ENCODE measurements at regions of chr11 and their contacts with region 1.

Region 1: GRCh38 chr11:33869481-33870422 is 22.1 kb downstream of the LMO2 start:
- DNase-seq: peak; percentile 39 to 92 (median 64)
- ATAC-seq: peak; percentile 81
- H3K4me3 ChIP-seq: peak overlapping the region; percentile 42 to 64
- H3K27ac ChIP-seq: peak overlapping the region; percentile 74 to 92
- H3K4me1 ChIP-seq: peaks cover 0 to 58% of the 10 kb centered on the region in 2 donors
- H3K27me3 ChIP-seq: peaks cover 5 to 32% of the 10 kb centered on the region in 2 donors
- CTCF ChIP-seq: no peak

Region 2: DNA sequence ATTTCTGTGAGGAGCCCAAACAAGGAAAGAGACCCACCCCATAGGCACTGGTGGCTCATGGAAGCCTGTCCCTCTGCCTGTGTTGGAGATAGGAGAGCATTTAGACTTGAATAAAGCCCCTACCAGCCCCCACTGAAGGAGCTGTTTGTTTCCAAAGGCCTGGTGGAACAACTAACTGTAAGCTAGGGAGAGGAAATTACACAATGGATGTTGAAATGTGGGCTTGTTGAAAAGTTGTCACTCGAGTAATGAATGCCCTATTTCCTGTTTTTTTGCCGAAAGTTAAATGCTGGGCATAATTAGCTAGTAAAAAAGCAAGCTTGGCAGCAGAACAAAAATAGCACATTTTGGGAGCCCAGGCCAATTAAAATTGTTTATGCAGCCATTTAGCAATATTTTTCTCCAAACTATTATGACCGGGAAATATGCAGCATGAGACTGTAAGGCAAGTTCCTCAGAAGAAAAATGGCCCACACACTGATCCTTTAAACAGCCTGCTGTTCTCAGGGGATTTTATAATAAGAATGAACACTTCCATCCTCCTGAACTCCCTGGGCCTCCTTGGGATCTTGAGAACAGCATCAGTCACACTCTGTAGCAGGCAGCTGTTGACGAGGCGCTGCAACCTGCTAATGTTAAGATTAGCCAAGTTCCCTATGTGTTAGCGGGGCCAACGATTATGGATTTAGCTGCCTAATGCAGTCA is 60.7 kb after region 1 on chr11:
- intact Hi-C with region 1: loop called in 1 of 2 experiments (anchors 5 kb)
- DNase-seq: peak in 2 of 4 donors; percentile 83 to 84
- ATAC-seq: peak; percentile 84
- H3K4me3 ChIP-seq: no peak overlapping the region
- H3K27ac ChIP-seq: peak overlapping the region; percentile 81 to 93
- H3K4me1 ChIP-seq: peaks cover 8 to 74% of the 10 kb centered on the region in 2 donors
- H3K27me3 ChIP-seq: no peaks in the 10 kb centered on the region
- CTCF ChIP-seq: no peak

Region 3: DNA sequence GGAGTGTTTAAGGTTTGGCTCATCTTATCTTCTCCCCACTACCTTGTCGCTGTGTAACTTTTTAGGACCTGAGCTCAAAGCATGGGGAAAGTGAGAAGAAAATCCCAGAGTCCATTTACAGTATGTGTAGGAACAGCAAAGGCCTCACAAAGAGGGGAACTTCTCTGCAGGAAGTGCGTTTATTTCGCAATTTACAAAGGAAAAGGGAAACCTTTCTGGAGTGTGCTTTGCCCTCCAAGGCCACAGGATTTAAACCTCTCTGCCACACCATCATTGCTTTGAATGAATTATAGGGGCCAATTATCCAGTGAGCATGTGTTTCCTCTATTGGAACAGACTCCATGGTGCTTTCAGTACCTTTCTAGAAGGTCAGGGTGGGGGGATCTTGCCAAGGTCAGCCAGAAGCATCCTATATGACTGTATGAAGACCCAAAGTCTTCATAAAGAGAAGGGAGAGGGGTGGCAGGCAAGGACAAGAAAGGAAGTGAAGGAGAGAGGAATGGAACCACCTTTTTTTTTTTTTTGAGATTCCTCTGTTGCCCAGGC is 90.2 kb after region 1 on chr11:
- intact Hi-C with region 1: loop called in 1 of 2 experiments (anchors 10 kb)
- DNase-seq: no peak
- ATAC-seq: no peak
- H3K4me3 ChIP-seq: no peak overlapping the region
- H3K27ac ChIP-seq: peak overlapping the region in 1 of 2 donors; percentile 42
- H3K4me1 ChIP-seq: peaks cover 0 to 11% of the 10 kb centered on the region in 2 donors
- H3K27me3 ChIP-seq: no peaks in the 10 kb centered on the region
- CTCF ChIP-seq: no peak

Region 4: DNA sequence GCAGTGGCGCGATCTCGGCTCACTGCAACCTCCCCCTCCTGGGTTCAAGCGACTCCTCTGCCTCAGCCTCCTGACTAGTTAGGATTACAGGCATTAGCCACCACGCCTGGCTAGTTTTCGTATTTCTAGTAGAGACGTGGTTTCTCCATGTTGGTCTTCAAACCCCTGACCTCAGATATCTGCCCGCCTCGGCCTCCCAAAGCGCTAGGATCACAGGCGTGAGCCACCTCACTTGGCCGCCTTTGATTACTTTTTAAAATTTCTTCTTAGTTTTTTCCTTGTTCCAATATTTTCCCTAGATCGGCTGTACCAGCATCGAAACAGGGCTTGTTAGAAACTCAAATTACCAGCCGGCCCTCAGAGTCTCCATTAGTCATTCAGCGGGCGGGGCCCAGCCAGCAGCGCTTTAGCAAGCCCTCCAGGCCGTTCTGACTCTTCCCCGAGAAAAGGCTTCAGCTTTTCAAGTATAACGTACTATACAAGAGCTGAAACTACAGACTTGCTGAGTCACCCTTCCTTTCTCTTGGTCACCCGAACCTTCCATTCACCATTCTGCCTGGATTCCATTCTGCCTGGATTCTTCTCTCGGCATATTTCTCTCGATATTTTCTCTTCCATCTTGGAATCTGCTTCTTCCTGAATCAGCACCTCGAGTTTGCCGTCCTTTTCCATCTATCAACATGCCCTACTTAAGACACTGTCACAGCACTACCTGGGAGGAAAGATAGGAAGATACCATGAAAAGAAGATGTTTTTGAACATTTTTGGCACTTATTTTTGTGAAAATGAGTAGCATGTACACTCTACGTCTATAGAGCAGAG is 175.1 kb after region 1 on chr11:
- intact Hi-C with region 1: no loop called
- DNase-seq: peak in 2 of 4 donors; percentile 7 to 59
- ATAC-seq: peak; percentile 79
- H3K4me3 ChIP-seq: no peak overlapping the region
- H3K27ac ChIP-seq: peak overlapping the region in 1 of 2 donors; percentile 20
- H3K4me1 ChIP-seq: peaks cover 0 to 4% of the 10 kb centered on the region in 2 donors
- H3K27me3 ChIP-seq: no peaks in the 10 kb centered on the region
- CTCF ChIP-seq: no peak

Measured in left lung (tissue), 14 donors.